T-cell (primary cell): ENCODE measurements at regions of chr12 and their contacts with region 1.

Region 1: GRCh38 chr12:90854136-90854689 is 100.8 kb downstream of the CCER1 start:
- DNase-seq: peak in 1 of 35 experiments; percentile 29
- ATAC-seq: no peak
- H3K4me3 ChIP-seq: no peak overlapping the region
- H3K4me3 Mint-ChIP-seq: no peak overlapping the region
- H3K27ac ChIP-seq: no peak overlapping the region
- H3K27ac Mint-ChIP-seq: no peak overlapping the region
- H3K4me1 ChIP-seq: no peaks in the 10 kb centered on the region
- H3K4me1 Mint-ChIP-seq: no peaks in the 10 kb centered on the region
- H3K27me3 ChIP-seq: peaks cover 0 to 4% of the 10 kb centered on the region in 2 experiments
- H3K27me3 Mint-ChIP-seq: no peaks in the 10 kb centered on the region

Region 2: DNA sequence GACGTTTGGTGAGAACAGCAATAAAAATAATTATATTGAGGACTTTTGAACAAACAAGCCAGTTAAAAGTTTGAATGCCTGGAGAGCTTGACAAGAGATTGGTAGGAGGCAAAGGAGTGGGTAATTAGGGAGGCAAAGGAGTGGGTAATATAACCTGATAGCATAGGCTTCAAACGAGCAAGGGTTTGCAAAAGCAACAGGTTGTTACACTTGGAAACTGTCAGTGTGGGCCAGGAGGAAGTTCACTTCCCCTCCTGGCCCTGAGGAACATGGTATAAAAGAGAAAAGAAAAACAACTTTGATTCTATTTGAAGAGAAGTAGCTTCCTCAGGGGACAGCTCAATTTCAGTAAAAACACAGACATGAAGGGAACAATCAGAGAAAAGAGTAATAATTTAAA is 21.0 kb before region 1 on chr12:
- CTCF ChIA-PET with region 1: interaction called, 3 to 10 read pairs
- POLR2A ChIA-PET with region 1: no interaction called
- DNase-seq: no peak
- ATAC-seq: no peak
- H3K4me3 ChIP-seq: no peak overlapping the region
- H3K4me3 Mint-ChIP-seq: no peak overlapping the region
- H3K27ac ChIP-seq: no peak overlapping the region
- H3K27ac Mint-ChIP-seq: no peak overlapping the region
- H3K4me1 ChIP-seq: no peaks in the 10 kb centered on the region
- H3K4me1 Mint-ChIP-seq: peaks cover 0 to 9% (median 3%) of the 10 kb centered on the region in 3 donors
- H3K27me3 ChIP-seq: no peaks in the 10 kb centered on the region
- H3K27me3 Mint-ChIP-seq: peaks cover 0 to 3% of the 10 kb centered on the region in 2 donors

Region 3: DNA sequence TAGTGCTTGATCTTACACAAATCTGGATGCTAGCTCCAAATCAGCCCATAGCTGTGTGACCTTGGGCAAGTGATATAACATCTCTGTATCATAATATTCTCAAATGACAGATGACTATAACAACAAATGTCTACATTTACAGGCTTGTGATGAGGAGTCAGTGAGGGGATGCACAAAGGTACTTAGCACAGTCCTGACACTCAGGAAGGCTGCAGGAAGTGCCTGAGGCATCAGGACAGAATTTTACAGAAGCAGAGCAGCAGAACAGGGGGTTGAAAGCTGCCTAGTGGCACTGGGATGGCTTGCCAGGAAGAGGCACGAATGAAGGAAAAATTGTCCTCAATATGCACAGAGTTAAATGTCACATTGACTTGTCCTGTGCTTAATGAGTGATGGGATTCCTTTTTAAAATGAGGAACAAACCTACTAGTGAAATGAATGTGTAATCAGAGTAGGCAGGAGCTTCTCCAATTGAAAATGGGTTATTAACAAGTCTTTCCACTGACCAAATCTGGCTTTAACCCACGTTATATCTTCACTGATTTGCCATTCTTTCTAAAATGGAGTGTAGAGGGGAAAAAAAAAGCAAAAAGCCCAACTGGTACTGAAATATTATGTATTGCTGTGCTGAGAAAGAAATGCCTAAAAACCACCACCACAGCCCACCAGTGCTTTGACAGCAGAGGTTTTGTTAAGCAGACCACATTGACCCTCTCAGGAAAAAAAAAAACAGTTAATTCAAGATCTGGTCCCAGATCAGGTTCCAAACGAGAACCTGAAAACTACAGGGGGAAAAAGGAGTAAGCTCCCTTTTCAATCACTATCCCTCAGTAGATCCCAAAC is 1279.8 kb after region 1 on chr12:
- CTCF ChIA-PET with region 1: no interaction called
- POLR2A ChIA-PET with region 1: no interaction called
- DNase-seq: no peak
- ATAC-seq: peak in 2 of 4 experiments; percentile 2 to 6
- H3K4me3 ChIP-seq: peak overlapping the region; percentile 44 to 77
- H3K4me3 Mint-ChIP-seq: peak overlapping the region; percentile 100
- H3K27ac ChIP-seq: peak overlapping the region; percentile 91
- H3K27ac Mint-ChIP-seq: peak overlapping the region; percentile 88 to 99
- H3K4me1 ChIP-seq: peaks cover 51 to 72% of the 10 kb centered on the region in 2 experiments
- H3K4me1 Mint-ChIP-seq: peaks cover 84 to 97% (median 92%) of the 10 kb centered on the region in 3 donors
- H3K27me3 ChIP-seq: no peaks in the 10 kb centered on the region
- H3K27me3 Mint-ChIP-seq: no peaks in the 10 kb centered on the region